Heart left ventricle (tissue), 16 donors: ENCODE measurements at regions of chr20 and their contacts with region 1.

Region 1: DNA sequence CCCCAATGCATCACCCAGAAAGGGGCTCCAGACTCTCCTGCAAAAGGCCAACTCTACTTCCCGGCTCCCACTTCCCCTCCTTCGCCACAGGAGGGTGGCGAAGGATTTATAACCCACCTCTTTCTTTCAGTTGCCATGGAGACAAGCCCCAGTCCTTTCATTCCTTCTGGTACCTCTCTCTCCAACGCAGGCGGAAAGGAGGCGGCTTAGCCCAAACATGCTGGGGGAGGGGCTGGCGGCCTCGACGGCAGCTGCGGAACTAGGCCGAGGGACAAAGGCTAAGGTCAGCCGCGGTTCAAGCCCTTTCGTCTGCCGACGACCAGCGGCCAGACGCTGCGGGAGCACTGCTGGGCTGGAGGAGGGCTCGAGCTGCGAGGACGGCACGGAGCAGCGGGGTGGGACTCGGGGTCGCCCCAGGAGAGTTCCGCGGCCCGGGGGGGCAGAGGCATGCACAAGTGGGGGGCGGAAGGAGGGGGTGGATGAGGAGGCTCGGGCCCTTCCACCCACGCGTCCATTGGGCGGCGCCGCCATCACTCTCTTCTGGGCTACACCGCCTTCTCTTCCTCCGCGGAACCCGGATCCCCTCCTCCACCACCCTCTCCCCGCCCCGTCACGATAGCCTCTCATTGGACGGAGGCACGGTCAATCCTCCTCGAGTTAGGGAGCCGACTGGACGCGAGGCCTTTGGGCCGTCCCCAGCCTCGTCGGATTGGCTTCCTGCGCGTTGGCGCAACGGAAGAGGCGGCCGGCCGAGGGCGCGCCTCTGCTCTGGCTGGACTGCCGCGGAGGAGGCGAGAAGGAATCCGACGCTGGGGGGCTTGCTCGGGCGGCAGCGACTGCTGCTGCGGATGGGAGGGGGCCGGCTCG is at the start of gene PANK2:
- DNase-seq: peak; percentile 99 to 100 (median 100)
- ATAC-seq: peak; percentile 97 to 99 (median 99)
- H3K4me3 ChIP-seq: peak within 1 kb of the TSS; percentile 59 to 100 (median 96)
- H3K27ac ChIP-seq: peak within 1 kb of the TSS; percentile 88 to 99 (median 96)
- H3K4me1 ChIP-seq: peaks cover 10 to 48% (median 42%) of the 10 kb centered on the region in 12 donors
- H3K27me3 ChIP-seq: no peaks in the 10 kb centered on the region
- CTCF ChIP-seq: peak in 11 of 12 donors; percentile 20 to 68 (median 44)
- POLR2A ChIP-seq: peak; percentile 45 to 94
- total RNA-seq, gene PANK2: 15.9 to 28.9 (median 18.1) TPM

Region 2: GRCh38 chr20:3811467-3812258 is 77.2 kb before region 1 on chr20:
- intact Hi-C with region 1: loop called in 1 of 10 experiments (anchors 2 kb)
- DNase-seq: peak; percentile 99
- ATAC-seq: peak; percentile 89 to 94 (median 92)
- H3K4me3 ChIP-seq: peak overlapping the region in 11 of 12 donors; percentile 4 to 62 (median 47)
- H3K27ac ChIP-seq: peak overlapping the region; percentile 76 to 96 (median 90)
- H3K4me1 ChIP-seq: peaks cover 14 to 75% (median 39%) of the 10 kb centered on the region in 12 donors
- H3K27me3 ChIP-seq: no peaks in the 10 kb centered on the region
- CTCF ChIP-seq: no peak
- POLR2A ChIP-seq: peak in 1 of 2 donors; percentile 75

Region 3: GRCh38 chr20:3871550-3872297 is 17.1 kb before region 1 on chr20:
- intact Hi-C with region 1: no loop called
- DNase-seq: no peak
- ATAC-seq: no peak
- H3K4me3 ChIP-seq: no peak overlapping the region
- H3K27ac ChIP-seq: no peak overlapping the region
- H3K4me1 ChIP-seq: peaks cover 0 to 18% (median 0%) of the 10 kb centered on the region in 12 donors
- H3K27me3 ChIP-seq: no peaks in the 10 kb centered on the region
- CTCF ChIP-seq: no peak
- POLR2A ChIP-seq: no peak

Region 4: GRCh38 chr20:3970016-3970415 is 81.2 kb after region 1 on chr20:
- intact Hi-C with region 1: loop called in 1 of 10 experiments (anchors 10 kb)
- DNase-seq: no peak
- ATAC-seq: peak in 3 of 4 donors; percentile 42 to 52 (median 45)
- H3K4me3 ChIP-seq: no peak overlapping the region
- H3K27ac ChIP-seq: no peak overlapping the region
- H3K4me1 ChIP-seq: peaks cover 0 to 12% (median 0%) of the 10 kb centered on the region in 12 donors
- H3K27me3 ChIP-seq: no peaks in the 10 kb centered on the region
- CTCF ChIP-seq: peak in 3 of 12 donors; percentile 5 to 29 (median 25)
- POLR2A ChIP-seq: no peak

Region 5: GRCh38 chr20:4064144-4064909 is 175.5 kb after region 1 on chr20:
- intact Hi-C with region 1: loop called in 4 of 10 experiments (anchors 5 to 10 kb)
- DNase-seq: peak; percentile 94 to 96 (median 95)
- ATAC-seq: peak; percentile 86 to 94 (median 91)
- H3K4me3 ChIP-seq: peak overlapping the region in 1 of 12 donors; percentile 21
- H3K27ac ChIP-seq: peak overlapping the region; percentile 62 to 95 (median 80)
- H3K4me1 ChIP-seq: peaks cover 10 to 86% (median 45%) of the 10 kb centered on the region in 12 donors
- H3K27me3 ChIP-seq: no peaks in the 10 kb centered on the region
- CTCF ChIP-seq: peak in 1 of 12 donors; percentile 19
- POLR2A ChIP-seq: no peak

Region 6: DNA sequence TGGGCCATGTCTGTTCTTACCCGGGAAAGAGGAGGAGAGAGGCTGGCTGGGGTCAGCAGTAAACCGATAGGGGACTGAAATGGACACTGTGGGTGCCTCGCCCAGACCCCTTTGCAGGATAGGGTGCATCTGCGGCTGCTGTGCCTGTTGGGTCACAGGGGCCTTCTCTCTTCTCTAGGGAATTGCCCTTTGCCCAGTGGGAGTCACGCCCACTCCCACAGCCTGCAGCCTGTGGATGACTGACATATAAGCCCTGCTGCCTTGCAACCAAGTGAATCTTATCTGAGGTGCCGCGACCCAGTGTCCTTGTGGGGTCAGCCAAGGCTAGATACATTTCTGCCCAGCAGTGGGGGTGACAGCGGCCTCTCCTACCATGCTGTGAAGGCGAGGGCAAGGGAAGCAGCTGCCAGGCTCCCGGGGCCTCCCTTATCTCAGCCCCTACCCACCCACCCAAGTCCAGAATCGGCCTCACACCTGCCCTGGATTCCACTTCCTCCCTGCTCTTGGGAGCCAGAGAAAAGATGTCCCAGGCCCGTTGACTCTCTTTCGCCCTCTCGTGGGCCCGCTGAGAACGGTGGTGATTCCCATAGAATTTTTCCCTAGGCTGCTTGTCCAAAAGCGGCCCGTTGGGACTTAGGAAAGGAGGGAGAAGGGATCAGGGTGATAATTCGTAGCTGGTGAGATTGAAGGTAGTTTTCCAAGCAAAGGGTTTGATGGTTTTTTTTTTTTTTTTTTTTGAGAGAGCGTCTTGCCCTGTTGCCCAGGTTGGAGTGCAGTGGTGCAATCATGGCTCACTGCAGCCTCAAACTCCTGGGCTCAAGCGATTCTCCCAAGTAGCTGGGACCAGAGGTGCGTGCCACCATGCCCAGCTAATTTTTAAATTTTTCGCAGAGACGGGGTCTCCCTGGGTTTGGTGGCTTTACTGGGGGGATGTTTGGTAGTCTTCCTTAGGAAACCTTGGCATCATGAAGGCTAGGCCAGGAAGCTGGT is 202.9 kb after region 1 on chr20:
- intact Hi-C with region 1: loop called in 2 of 10 experiments (anchors 5 kb)
- DNase-seq: peak; percentile 53 to 80 (median 67)
- ATAC-seq: peak; percentile 39 to 74 (median 70)
- H3K4me3 ChIP-seq: no peak overlapping the region
- H3K27ac ChIP-seq: peak overlapping the region in 1 of 12 donors; percentile 22
- H3K4me1 ChIP-seq: peaks cover 0 to 9% (median 0%) of the 10 kb centered on the region in 12 donors
- H3K27me3 ChIP-seq: no peaks in the 10 kb centered on the region
- CTCF ChIP-seq: peak; percentile 49 to 72 (median 60)
- POLR2A ChIP-seq: no peak